H1 (cell line): ENCODE measurements at regions of chr9 and their contacts with region 1.

Region 1: GRCh38 chr9:78035383-78035993 is 3.9 kb upstream of the GNAQ start:
- DNase-seq: no peak
- H3K4me3 ChIP-seq: no peak overlapping the region
- H3K27ac ChIP-seq: no peak overlapping the region
- H3K4me1 ChIP-seq: peaks cover 0 to 5% (median 0%) of the 10 kb centered on the region in 4 experiments; a peak in 3 of 7 replicates
- H3K27me3 ChIP-seq: no peaks in the 10 kb centered on the region
- CTCF ChIP-seq: peak; percentile 16 to 76 (median 74)
- EP300 ChIP-seq: no peak
- POLR2A ChIP-seq: no peak
- RAD21 ChIP-seq: peak; percentile 79 to 88

Region 2: DNA sequence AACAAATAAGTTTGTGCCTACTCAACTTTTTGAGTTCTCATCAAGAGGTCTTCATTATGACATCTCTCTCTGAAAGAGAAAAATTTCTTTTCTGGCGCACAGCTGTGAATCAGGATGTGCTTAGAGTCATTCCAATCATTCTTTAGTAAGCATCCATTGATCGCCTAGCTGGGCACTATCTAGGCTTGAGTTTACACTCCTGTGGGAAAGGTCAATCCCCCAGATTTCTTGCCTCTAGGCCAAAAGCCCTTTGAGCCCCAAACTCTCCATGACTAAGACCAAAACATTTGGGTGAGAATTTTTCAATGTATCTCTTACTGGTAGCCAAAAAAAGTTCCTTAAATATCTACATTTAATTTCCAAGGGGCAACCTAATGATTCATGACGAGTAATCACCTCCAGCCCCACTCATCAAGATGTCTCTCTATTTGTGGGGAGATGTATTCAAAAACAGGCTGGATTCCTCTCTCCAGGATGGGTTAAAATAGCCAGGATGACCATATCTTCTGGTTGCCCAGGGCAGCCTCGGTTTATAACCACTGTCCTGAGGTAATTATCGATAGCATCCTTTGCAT is 489.0 kb before region 1 on chr9:
- CTCF ChIA-PET with region 1: no interaction called
- POLR2A ChIA-PET with region 1: no interaction called
- DNase-seq: no peak
- H3K4me3 ChIP-seq: no peak overlapping the region
- H3K27ac ChIP-seq: no peak overlapping the region
- H3K4me1 ChIP-seq: peaks cover 0 to 5% (median 0%) of the 10 kb centered on the region in 4 experiments; a peak in 1 of 7 replicates
- H3K27me3 ChIP-seq: no peaks in the 10 kb centered on the region
- CTCF ChIP-seq: no peak
- EP300 ChIP-seq: no peak
- POLR2A ChIP-seq: no peak
- RAD21 ChIP-seq: no peak

Region 3: GRCh38 chr9:77949751-77950436 is 85.6 kb before region 1 on chr9:
- CTCF ChIA-PET with region 1: interaction called, 13 read pairs
- POLR2A ChIA-PET with region 1: no interaction called
- DNase-seq: no peak
- H3K4me3 ChIP-seq: no peak overlapping the region
- H3K27ac ChIP-seq: no peak overlapping the region
- H3K4me1 ChIP-seq: peaks cover under 1 to 4% (median 2%) of the 10 kb centered on the region in 4 experiments; a peak in 5 of 7 replicates
- H3K27me3 ChIP-seq: no peaks in the 10 kb centered on the region
- CTCF ChIP-seq: no peak
- EP300 ChIP-seq: no peak
- POLR2A ChIP-seq: no peak
- RAD21 ChIP-seq: no peak

Region 4: DNA sequence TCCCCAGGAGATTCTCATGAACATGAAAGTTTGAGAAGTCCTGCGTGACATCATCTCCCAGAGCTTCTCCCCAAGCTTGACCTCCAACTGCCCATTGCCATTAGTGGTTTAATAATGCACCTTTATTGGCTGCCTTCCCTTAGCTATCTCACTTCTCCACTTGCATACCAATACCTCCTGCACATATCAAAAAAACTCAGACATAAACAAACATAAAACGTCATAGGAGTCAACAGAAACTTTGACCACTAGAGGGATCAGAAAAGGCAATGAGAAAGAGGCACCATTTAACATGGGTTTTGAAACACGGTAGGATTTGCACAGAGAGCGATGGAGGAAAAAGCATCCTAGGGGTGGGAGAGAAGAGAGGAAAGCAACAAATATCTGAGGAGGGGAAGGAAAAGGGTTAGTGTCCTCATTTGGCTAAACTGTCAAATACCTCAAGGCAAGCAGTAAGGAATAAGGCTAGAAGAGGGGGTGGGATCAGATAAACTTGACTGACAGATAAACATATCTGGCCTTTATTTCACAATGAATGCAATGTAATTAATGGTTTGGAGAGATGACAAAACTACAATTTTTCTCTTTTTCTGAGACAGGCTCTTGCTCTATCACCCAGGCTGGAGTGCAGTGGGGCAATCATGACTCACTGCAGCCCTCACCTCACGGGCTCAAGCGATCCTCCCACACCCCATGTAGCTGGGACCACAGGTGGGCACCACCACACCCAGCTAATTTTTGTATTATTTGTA is 30.8 kb before region 1 on chr9:
- CTCF ChIA-PET with region 1: interaction called, 22 read pairs
- POLR2A ChIA-PET with region 1: interaction called, 4 read pairs
- DNase-seq: no peak
- H3K4me3 ChIP-seq: no peak overlapping the region
- H3K27ac ChIP-seq: no peak overlapping the region
- H3K4me1 ChIP-seq: no peaks in the 10 kb centered on the region
- H3K27me3 ChIP-seq: no peaks in the 10 kb centered on the region
- CTCF ChIP-seq: peak in 1 of 3 experiments; percentile 15; a peak in 1 of 4 replicates
- EP300 ChIP-seq: no peak
- POLR2A ChIP-seq: no peak
- RAD21 ChIP-seq: no peak

Region 5: GRCh38 chr9:78046112-78046511 is 10.6 kb after region 1 on chr9:
- CTCF ChIA-PET with region 1: interaction called, 21 read pairs
- POLR2A ChIA-PET with region 1: interaction called, 8 read pairs
- DNase-seq: no peak
- H3K4me3 ChIP-seq: no peak overlapping the region
- H3K27ac ChIP-seq: no peak overlapping the region
- H3K4me1 ChIP-seq: peaks cover 0 to 4% (median 0%) of the 10 kb centered on the region in 4 experiments; a peak in 1 of 7 replicates
- H3K27me3 ChIP-seq: no peaks in the 10 kb centered on the region
- CTCF ChIP-seq: no peak
- EP300 ChIP-seq: no peak
- POLR2A ChIP-seq: no peak
- RAD21 ChIP-seq: no peak

Region 6: GRCh38 chr9:78167356-78167755 is 131.9 kb after region 1 on chr9:
- CTCF ChIA-PET with region 1: no interaction called
- POLR2A ChIA-PET with region 1: no interaction called
- DNase-seq: no peak
- H3K4me3 ChIP-seq: no peak overlapping the region
- H3K27ac ChIP-seq: no peak overlapping the region
- H3K4me1 ChIP-seq: no peaks in the 10 kb centered on the region
- H3K27me3 ChIP-seq: no peaks in the 10 kb centered on the region; a peak in 1 of 7 replicates
- CTCF ChIP-seq: no peak
- EP300 ChIP-seq: no peak
- POLR2A ChIP-seq: no peak
- RAD21 ChIP-seq: no peak